PC-3 (cell line): ENCODE measurements at regions of chr17 and their contacts with region 1.

Region 1: DNA sequence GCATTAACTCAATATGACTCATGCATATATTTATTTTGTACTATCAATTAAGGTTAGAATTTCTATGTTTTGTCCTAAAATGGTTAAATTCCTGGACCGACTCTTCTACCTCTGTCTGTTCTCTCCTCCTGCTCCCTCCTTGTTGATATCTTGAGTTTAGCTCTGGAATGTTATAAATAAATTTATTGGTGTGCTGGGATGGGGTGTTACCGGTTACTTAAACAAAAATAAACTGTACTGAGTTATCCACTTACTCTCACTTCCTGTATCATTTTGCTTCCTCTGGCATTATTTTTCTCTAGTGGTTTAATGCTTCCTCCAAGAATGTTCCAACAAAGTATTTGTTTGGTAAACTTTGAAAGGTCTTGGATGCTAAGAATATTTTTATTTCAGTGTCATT is 120.1 kb downstream of the ABCA8 start:
- DNase-seq: peak; percentile 54
- ATAC-seq: peak; percentile 95
- H3K4me3 ChIP-seq: no peak overlapping the region
- H3K27ac ChIP-seq: peak overlapping the region; percentile 13; the same call in 1 of the 2 replicates
- H3K4me1 ChIP-seq: peaks cover 12% of the 10 kb centered on the region
- H3K27me3 ChIP-seq: no peaks in the 10 kb centered on the region
- CTCF ChIP-seq: no peak

Region 2: DNA sequence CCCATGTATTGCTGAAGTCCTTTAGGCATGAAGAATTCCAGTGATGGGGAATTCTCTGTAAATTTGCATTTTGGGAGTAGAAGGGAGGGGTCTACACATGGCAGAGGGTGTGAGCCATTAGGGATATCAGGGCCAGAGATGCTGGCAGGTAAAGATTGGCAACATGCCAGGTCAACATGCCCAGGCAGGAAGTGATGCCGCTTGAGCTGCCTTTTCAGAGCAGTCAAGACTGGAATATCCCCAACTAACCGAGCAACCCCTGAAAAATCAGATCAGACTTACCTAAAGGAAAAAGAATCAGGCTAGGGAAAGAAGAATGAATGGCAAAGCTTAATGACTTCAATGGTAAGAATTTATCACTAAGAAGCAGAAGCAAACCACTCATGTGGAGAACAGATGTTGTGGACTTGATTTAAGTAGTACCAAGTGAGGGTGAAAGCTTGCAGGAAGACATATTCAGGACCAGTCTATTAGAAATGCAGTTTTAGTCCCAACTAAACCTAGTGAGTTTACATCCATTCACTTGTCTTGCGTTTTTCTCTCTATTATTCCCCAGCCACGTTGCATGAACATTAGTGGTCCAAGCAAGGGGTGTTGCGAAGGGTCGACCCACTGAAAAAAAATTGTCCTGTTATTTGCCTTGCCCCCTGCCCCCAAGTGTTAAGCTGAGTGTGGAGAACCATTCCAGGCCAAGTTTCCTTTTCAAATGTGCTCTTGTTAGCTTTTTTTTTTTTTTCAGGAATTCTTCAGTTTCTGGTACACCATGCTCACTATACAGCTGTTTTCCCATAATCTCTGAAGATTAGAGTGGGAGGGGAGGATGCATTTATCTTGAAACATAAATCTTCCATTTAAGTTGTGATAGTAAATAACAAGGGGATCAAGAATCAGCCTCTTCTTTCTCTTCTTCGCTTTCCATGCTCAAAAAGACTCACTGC is 14.9 kb after region 1 on chr17:
- CTCF ChIA-PET with region 1: no interaction called
- POLR2A ChIA-PET with region 1: no interaction called
- intact Hi-C with region 1: loop called (anchors 1 kb)
- DNase-seq: no peak
- ATAC-seq: no peak
- H3K4me3 ChIP-seq: no peak overlapping the region
- H3K27ac ChIP-seq: no peak overlapping the region
- H3K4me1 ChIP-seq: no peaks in the 10 kb centered on the region
- H3K27me3 ChIP-seq: no peaks in the 10 kb centered on the region
- CTCF ChIP-seq: no peak

Region 3: DNA sequence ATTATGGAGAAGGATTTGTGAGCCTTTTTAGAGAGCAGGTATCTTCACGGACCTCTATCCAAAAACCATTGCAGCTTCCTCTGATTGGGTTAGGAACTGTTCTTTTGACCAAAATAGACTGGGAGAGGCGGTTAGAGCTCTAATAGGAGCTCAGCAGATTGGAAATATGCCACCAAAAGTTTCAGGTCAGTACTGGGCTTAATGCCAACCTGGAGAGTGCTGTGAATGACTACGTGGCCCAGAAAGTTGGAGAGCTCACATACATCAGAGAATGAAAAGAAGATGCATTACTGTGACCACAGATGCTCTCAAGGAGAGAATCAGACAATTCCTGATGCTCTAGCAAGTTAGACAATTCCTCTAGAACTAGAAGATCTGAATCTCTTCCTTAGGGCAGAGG is 33.6 kb after region 1 on chr17:
- CTCF ChIA-PET with region 1: no interaction called
- POLR2A ChIA-PET with region 1: no interaction called
- intact Hi-C with region 1: no loop called
- DNase-seq: peak; percentile 48
- ATAC-seq: peak; percentile 20; the same call in 1 of the 2 replicates
- H3K4me3 ChIP-seq: no peak overlapping the region
- H3K27ac ChIP-seq: no peak overlapping the region
- H3K4me1 ChIP-seq: no peaks in the 10 kb centered on the region
- H3K27me3 ChIP-seq: no peaks in the 10 kb centered on the region
- CTCF ChIP-seq: no peak